CD4-positive, alpha-beta memory T cell (primary cell): ENCODE measurements at regions of chr7 and their contacts with region 1.

Region 1: GRCh38 chr7:150448789-150449147 is 1.7 kb upstream of the GIMAP8 start:
- DNase-seq: peak; percentile 88 to 91 (median 89)
- H3K4me3 ChIP-seq: peak overlapping the region in 1 of 2 donors; percentile 36
- H3K4me3 Mint-ChIP-seq: peak overlapping the region; percentile 78 to 100 (median 100)
- H3K27ac ChIP-seq: peak overlapping the region; percentile 84
- H3K27ac Mint-ChIP-seq: peak overlapping the region; percentile 84 to 98 (median 96)
- H3K4me1 ChIP-seq: peaks cover 51% of the 10 kb centered on the region
- H3K4me1 Mint-ChIP-seq: peaks cover 34 to 64% (median 46%) of the 10 kb centered on the region in 4 donors
- H3K27me3 ChIP-seq: no peaks in the 10 kb centered on the region
- H3K27me3 Mint-ChIP-seq: no peaks in the 10 kb centered on the region

Region 2: GRCh38 chr7:149559711-149560110 is 889.1 kb before region 1 on chr7:
- CTCF ChIA-PET with region 1: no interaction called
- POLR2A ChIA-PET with region 1: no interaction called
- intact Hi-C with region 1: no loop called
- DNase-seq: no peak
- H3K4me3 ChIP-seq: no peak overlapping the region
- H3K4me3 Mint-ChIP-seq: peak overlapping the region in 1 of 8 donors; percentile 31
- H3K27ac ChIP-seq: no peak overlapping the region
- H3K27ac Mint-ChIP-seq: peak overlapping the region in 3 of 7 donors; percentile 32 to 69 (median 65)
- H3K4me1 ChIP-seq: no peaks in the 10 kb centered on the region
- H3K4me1 Mint-ChIP-seq: peaks cover 0 to 11% (median 6%) of the 10 kb centered on the region in 4 donors
- H3K27me3 ChIP-seq: no peaks in the 10 kb centered on the region
- H3K27me3 Mint-ChIP-seq: no peaks in the 10 kb centered on the region

Region 3: GRCh38 chr7:150502519-150502918 is 53.8 kb after region 1 on chr7:
- CTCF ChIA-PET with region 1: interaction called, 12 read pairs
- POLR2A ChIA-PET with region 1: interaction called, 280 read pairs
- intact Hi-C with region 1: no loop called
- DNase-seq: peak; percentile 56 to 75 (median 67)
- H3K4me3 ChIP-seq: no peak overlapping the region
- H3K4me3 Mint-ChIP-seq: peak overlapping the region; percentile 22 to 86 (median 73)
- H3K27ac ChIP-seq: peak overlapping the region; percentile 51
- H3K27ac Mint-ChIP-seq: peak overlapping the region; percentile 84 to 99 (median 92)
- H3K4me1 ChIP-seq: peaks cover 53% of the 10 kb centered on the region
- H3K4me1 Mint-ChIP-seq: peaks cover 66 to 94% (median 81%) of the 10 kb centered on the region in 4 donors
- H3K27me3 ChIP-seq: no peaks in the 10 kb centered on the region
- H3K27me3 Mint-ChIP-seq: no peaks in the 10 kb centered on the region

Region 4: DNA sequence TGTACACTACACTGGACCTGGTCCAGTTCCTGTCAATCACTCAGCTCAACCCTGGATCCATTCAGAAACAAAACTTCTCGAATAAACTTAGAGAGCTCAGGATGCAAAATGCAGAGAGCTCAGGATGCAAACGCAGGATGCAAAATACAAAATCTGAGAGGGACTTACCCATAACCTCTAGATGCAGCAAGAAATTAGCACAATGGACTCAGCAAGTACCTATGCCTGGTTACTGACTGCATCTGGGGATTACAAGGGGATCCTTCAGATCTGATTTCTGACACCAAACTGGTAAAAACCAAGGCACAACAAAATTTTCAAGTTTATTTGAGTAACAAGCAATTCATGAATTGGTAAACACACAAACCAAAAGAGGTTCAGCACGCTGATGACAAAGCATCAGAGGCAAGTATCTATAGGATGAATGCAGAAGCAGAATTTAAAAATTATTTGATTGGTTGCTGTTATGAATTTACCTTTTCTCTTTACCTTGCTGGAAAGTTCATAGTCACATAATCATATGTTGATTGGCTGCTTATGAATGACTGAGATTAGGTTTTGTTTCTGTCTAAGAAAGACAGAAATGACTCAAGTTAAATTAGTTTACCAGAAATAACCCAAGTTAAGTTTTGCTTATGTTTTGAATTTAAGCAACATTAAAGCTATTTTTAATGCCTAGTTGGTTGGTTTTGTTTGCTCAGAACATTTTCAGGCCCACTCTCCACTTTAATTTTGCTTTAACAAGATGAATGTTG is 172.0 kb after region 1 on chr7:
- CTCF ChIA-PET with region 1: interaction called, 11 read pairs
- POLR2A ChIA-PET with region 1: interaction called, 12 read pairs
- intact Hi-C with region 1: no loop called
- DNase-seq: no peak
- H3K4me3 ChIP-seq: no peak overlapping the region
- H3K4me3 Mint-ChIP-seq: peak overlapping the region; percentile 2 to 63 (median 44)
- H3K27ac ChIP-seq: no peak overlapping the region
- H3K27ac Mint-ChIP-seq: peak overlapping the region; percentile 70 to 92 (median 86)
- H3K4me1 ChIP-seq: peaks cover 41% of the 10 kb centered on the region
- H3K4me1 Mint-ChIP-seq: peaks cover 42 to 61% (median 54%) of the 10 kb centered on the region in 4 donors
- H3K27me3 ChIP-seq: no peaks in the 10 kb centered on the region
- H3K27me3 Mint-ChIP-seq: no peaks in the 10 kb centered on the region

Region 5: GRCh38 chr7:150685219-150686029 is 236.7 kb after region 1 on chr7 and contains the start of gene GIMAP2:
- CTCF ChIA-PET with region 1: interaction called, 19 read pairs
- POLR2A ChIA-PET with region 1: interaction called, 47 read pairs
- intact Hi-C with region 1: loop called (anchors 2 kb)
- DNase-seq: peak; percentile 64 to 69 (median 65)
- H3K4me3 ChIP-seq: peak within 1 kb of the TSS; percentile 80 to 97
- H3K4me3 Mint-ChIP-seq: peak within 1 kb of the TSS; percentile 94 to 99 (median 98)
- H3K27ac ChIP-seq: peak within 1 kb of the TSS; percentile 90
- H3K27ac Mint-ChIP-seq: peak within 1 kb of the TSS; percentile 90 to 99 (median 97)
- H3K4me1 ChIP-seq: peaks cover 60% of the 10 kb centered on the region
- H3K4me1 Mint-ChIP-seq: peaks cover 55 to 97% (median 74%) of the 10 kb centered on the region in 4 donors
- H3K27me3 ChIP-seq: no peaks in the 10 kb centered on the region
- H3K27me3 Mint-ChIP-seq: no peaks in the 10 kb centered on the region
- total RNA-seq, gene GIMAP2: 238 to 244 TPM

Region 6: DNA sequence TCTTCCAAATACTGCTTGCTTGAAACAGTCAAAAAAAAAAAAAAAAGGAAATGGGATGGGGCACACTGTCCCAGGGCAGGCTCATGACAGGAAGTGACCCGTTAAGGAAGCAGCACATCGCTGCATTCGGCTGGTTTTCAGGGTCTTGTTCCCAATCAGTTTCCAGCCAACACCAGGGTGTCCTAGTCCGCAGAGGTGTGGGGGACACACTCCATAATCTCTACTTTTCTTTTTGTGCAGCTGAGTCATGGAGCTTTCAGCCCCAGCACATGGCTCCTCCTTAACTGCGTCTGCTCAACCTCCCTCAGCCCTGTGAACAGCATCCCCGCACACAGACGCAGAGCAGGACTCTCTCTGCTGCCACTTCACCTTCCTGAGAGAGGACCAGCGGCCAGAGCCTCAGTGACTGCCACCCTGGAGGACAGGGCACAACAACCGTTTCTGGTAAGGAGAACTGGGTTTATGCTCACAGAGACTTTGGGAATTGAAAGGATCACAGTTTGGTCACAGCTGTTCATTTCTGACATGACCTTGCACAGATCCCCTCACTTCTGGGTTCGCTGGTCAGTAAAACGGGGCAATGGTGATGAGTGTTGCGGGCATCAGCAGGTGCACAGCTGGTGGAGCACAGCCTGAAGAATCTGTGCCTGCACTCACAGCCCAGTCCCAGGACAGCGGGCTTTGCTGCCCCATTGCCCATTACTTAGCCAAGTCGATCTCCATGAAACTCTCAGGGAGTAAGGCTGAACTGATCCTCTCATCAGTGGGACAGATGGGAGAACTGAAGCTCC is 288.7 kb after region 1 on chr7 and contains the start of gene GIMAP5:
- CTCF ChIA-PET with region 1: interaction called, 15 read pairs
- POLR2A ChIA-PET with region 1: interaction called, 232 read pairs
- intact Hi-C with region 1: loop called (anchors 1 kb)
- DNase-seq: peak in 4 of 5 donors; percentile 58 to 74 (median 61)
- H3K4me3 ChIP-seq: peak within 1 kb of the TSS; percentile 81 to 82
- H3K4me3 Mint-ChIP-seq: peak within 1 kb of the TSS; percentile 92 to 100 (median 98)
- H3K27ac ChIP-seq: peak within 1 kb of the TSS; percentile 83
- H3K27ac Mint-ChIP-seq: peak within 1 kb of the TSS; percentile 86 to 98 (median 96)
- H3K4me1 ChIP-seq: peaks cover 64% of the 10 kb centered on the region
- H3K4me1 Mint-ChIP-seq: peaks cover 55 to 94% (median 64%) of the 10 kb centered on the region in 4 donors
- H3K27me3 ChIP-seq: no peaks in the 10 kb centered on the region
- H3K27me3 Mint-ChIP-seq: no peaks in the 10 kb centered on the region
- total RNA-seq, gene GIMAP5: 296 to 297 TPM

Region 7: DNA sequence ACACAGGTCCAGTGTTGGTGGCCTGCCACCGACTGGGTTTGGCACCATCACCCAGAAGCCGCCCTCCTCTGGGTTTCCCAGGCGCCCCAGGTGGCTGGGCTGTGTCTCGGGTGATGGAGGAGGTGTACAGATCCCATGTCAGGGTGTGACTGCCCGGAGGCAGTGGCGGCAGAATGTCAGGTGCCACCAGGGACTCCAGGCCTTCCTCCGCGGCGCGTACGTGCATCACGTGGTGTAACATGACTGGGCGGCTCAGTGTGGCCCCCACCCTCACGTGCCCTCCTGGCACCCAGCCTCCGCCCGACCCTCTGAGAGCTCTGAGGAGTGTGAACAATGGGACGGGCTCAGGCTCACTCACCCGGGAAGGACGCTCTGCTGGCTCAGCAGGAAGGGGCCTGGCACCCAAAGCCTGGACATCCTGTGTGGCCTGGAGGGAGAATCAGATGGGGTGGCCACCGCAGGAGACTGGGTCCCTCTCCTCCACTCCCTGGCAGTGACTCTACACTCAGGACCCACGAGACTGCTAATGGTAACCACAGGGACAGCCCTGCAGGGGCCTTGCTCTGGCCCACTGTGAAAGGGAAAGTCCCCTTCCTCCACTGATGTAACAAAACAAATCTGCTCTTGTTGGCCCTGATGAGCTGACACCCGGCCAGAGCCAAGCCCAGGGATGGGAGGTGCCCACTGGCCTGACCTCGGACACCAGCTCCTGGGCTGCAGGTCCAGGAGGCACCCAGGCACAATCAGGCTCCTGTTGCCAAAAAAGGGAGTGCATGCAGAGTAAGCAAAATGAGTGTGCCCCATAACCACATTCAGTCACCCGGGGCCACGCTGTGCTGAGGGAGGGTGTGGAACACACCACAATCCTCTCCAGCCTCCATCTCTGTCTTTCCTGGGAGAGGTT is 1263.4 kb after region 1 on chr7:
- CTCF ChIA-PET with region 1: no interaction called
- POLR2A ChIA-PET with region 1: no interaction called
- intact Hi-C with region 1: no loop called
- DNase-seq: no peak
- H3K4me3 ChIP-seq: no peak overlapping the region
- H3K4me3 Mint-ChIP-seq: no peak overlapping the region
- H3K27ac ChIP-seq: no peak overlapping the region
- H3K27ac Mint-ChIP-seq: peak overlapping the region in 1 of 7 donors; percentile 60
- H3K4me1 ChIP-seq: no peaks in the 10 kb centered on the region
- H3K4me1 Mint-ChIP-seq: peaks cover 0 to 4% (median under 1%) of the 10 kb centered on the region in 4 donors
- H3K27me3 ChIP-seq: no peaks in the 10 kb centered on the region
- H3K27me3 Mint-ChIP-seq: no peaks in the 10 kb centered on the region